HepG2 (cell line): ENCODE measurements at regions of chr14 and their contacts with region 1.

Region 1: GRCh38 chr14:69398053-69398817 is at the starts of genes ERH and SLC39A9:
- DNase-seq: peak; percentile 96
- ATAC-seq: peak; percentile 95
- H3K4me3 ChIP-seq: peak within 1 kb of the TSS; percentile 78 to 94 (median 90)
- H3K27ac ChIP-seq: peak within 1 kb of the TSS; percentile 95
- H3K4me1 ChIP-seq: peaks cover 52% of the 10 kb centered on the region
- H3K27me3 ChIP-seq: no peaks in the 10 kb centered on the region; a peak in 1 of 5 replicates
- CTCF ChIP-seq: no peak
- EP300 ChIP-seq: no peak
- POLR2A ChIP-seq: peak; percentile 85 to 95
- RAD21 ChIP-seq: peak; percentile 36; the same call in 1 of the 2 replicates
- total RNA-seq, gene ERH: 341 and 491 TPM in 2 replicates
- total RNA-seq, gene SLC39A9: 63.8 and 69.5 TPM in 2 replicates

Region 2: GRCh38 chr14:69376439-69376838 is 21.8 kb before region 1 on chr14:
- CTCF ChIA-PET with region 1: no interaction called
- POLR2A ChIA-PET with region 1: interaction called, 12 read pairs
- in situ Hi-C with region 1: no loop called
- intact Hi-C with region 1: no loop called
- DNase-seq: peak; percentile 40
- ATAC-seq: no peak
- H3K4me3 ChIP-seq: no peak overlapping the region
- H3K27ac ChIP-seq: no peak overlapping the region
- H3K4me1 ChIP-seq: 0 out of 2 replicates have a peak, but pooled peaks cover 9% of the 10 kb centered on the region
- H3K27me3 ChIP-seq: no peaks in the 10 kb centered on the region
- CTCF ChIP-seq: no peak
- EP300 ChIP-seq: no peak
- POLR2A ChIP-seq: no peak
- RAD21 ChIP-seq: no peak

Region 3: DNA sequence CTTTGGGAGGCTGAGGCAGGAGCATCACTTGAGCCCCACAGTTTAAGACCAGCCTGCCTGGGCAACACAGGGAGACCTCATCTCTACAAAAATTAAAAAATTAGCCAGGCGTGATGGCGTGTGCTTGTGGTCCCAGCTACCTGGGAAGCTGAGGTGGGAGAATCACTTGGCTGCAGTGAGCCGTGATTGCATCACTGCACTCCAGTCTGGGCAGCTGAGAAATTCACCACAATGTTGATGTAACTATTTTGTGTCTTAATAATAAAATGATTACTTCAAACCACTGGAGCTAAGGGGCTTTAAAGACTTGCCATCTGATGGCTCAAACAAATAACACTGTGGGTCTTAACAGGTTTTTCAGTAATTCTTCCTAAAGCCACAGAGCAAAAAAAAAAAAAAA is 10.9 kb before region 1 on chr14:
- CTCF ChIA-PET with region 1: no interaction called
- POLR2A ChIA-PET with region 1: interaction called, 14 read pairs
- in situ Hi-C with region 1: no loop called
- intact Hi-C with region 1: no loop called
- DNase-seq: no peak
- ATAC-seq: no peak
- H3K4me3 ChIP-seq: no peak overlapping the region
- H3K27ac ChIP-seq: no peak overlapping the region
- H3K4me1 ChIP-seq: peaks cover 24% of the 10 kb centered on the region
- H3K27me3 ChIP-seq: no peaks in the 10 kb centered on the region
- CTCF ChIP-seq: no peak
- EP300 ChIP-seq: no peak
- POLR2A ChIP-seq: no peak
- RAD21 ChIP-seq: no peak

Region 4: DNA sequence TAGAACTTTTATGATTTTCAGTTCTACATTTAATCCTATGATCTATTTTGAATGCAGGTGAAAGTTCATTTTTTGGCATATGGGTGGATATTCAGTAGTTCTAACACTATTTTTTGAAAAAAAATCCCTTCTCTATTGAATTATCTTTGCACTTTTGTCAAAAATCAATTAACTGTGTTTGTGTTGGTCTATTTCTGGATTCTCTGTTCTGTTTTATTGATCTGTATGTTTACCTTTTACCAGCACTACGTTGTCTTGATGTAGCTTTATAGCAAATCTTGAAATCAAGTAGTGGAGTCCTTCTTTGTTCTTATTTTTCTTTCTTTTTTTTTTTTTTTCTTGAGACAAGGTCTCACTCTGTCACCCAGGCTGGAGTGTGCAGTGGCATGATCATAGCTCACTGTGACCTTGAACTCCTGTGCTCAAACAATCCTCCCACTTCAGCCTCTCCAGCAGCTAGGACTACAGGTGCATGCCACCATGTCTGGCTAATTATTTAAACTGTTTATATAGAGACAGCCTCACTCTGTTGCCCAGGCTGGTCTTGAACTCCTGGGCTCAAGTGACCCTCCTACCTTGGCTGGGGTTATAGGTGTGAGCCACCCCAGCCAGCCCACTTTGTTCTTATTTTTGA is 32.2 kb after region 1 on chr14:
- CTCF ChIA-PET with region 1: no interaction called
- POLR2A ChIA-PET with region 1: interaction called, 11 read pairs
- in situ Hi-C with region 1: no loop called
- intact Hi-C with region 1: loop called (anchors 1 kb)
- DNase-seq: peak; percentile 64
- ATAC-seq: peak; percentile 94
- H3K4me3 ChIP-seq: no peak overlapping the region
- H3K27ac ChIP-seq: peak overlapping the region; percentile 39
- H3K4me1 ChIP-seq: peaks cover 15% of the 10 kb centered on the region
- H3K27me3 ChIP-seq: no peaks in the 10 kb centered on the region
- CTCF ChIP-seq: no peak
- EP300 ChIP-seq: 0 out of 4 replicates have a peak, but pooled peaks of 1 of the 2 experiments have one; percentile 13
- POLR2A ChIP-seq: no peak
- RAD21 ChIP-seq: no peak

Region 5: DNA sequence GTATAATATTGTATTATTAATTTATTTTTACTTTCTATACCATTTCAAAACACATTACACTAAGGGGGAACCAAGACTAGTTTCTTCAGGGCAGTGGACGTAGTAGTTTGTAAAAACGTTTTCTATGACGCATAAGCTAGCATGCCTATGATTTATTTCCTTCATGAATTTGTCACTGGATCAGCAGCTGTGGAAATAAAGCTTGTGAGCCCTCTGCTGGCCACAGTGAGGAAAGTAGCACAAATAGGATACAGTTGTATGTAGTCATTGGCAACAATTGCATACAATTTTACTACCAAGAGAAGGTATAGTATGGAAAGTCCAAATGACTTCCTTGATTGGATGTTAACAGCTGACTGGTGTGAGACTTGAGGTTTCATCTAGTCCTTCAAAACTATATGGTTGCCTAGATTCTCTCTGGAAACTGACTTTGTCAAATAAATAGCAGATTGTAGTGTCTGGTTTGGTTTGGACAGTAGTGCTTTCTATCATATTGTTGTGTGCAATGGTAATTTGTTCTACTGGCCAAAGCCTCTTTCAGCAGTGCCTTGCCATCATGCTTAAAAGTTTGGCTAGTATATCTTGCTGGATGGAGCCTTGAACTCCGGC is 62.0 kb after region 1 on chr14:
- CTCF ChIA-PET with region 1: interaction called, 4 read pairs
- POLR2A ChIA-PET with region 1: interaction called, 4 read pairs
- in situ Hi-C with region 1: loop called (anchors 5 kb)
- intact Hi-C with region 1: loop called (anchors 1 kb)
- DNase-seq: peak; percentile 73
- ATAC-seq: peak; percentile 79
- H3K4me3 ChIP-seq: no peak overlapping the region
- H3K27ac ChIP-seq: no peak overlapping the region
- H3K4me1 ChIP-seq: no peaks in the 10 kb centered on the region
- H3K27me3 ChIP-seq: no peaks in the 10 kb centered on the region
- CTCF ChIP-seq: peak; percentile 79
- EP300 ChIP-seq: no peak
- POLR2A ChIP-seq: no peak
- RAD21 ChIP-seq: peak; percentile 59